G401 (cell line): ENCODE measurements at regions of chr2 and their contacts with region 1.

Region 1: GRCh38 chr2:42754021-42754775 is 9.7 kb downstream of the OXER1 start:
- DNase-seq: peak; percentile 82

Region 2: GRCh38 chr2:42568401-42569115 is 185.6 kb before region 1 on chr2 and contains the start of gene MTA3:
- in situ Hi-C with region 1: loop called (anchors 10 kb)
- DNase-seq: peak; percentile 45
- total RNA-seq, gene MTA3: 61.2 and 65.4 TPM in 2 replicates

Region 3: GRCh38 chr2:42828487-42829425 is 74.6 kb after region 1 on chr2:
- in situ Hi-C with region 1: no loop called
- DNase-seq: peak; percentile 77